Endothelial cell of umbilical vein (primary cell): ENCODE measurements at regions of chr7 and their contacts with region 1.

Region 1: DNA sequence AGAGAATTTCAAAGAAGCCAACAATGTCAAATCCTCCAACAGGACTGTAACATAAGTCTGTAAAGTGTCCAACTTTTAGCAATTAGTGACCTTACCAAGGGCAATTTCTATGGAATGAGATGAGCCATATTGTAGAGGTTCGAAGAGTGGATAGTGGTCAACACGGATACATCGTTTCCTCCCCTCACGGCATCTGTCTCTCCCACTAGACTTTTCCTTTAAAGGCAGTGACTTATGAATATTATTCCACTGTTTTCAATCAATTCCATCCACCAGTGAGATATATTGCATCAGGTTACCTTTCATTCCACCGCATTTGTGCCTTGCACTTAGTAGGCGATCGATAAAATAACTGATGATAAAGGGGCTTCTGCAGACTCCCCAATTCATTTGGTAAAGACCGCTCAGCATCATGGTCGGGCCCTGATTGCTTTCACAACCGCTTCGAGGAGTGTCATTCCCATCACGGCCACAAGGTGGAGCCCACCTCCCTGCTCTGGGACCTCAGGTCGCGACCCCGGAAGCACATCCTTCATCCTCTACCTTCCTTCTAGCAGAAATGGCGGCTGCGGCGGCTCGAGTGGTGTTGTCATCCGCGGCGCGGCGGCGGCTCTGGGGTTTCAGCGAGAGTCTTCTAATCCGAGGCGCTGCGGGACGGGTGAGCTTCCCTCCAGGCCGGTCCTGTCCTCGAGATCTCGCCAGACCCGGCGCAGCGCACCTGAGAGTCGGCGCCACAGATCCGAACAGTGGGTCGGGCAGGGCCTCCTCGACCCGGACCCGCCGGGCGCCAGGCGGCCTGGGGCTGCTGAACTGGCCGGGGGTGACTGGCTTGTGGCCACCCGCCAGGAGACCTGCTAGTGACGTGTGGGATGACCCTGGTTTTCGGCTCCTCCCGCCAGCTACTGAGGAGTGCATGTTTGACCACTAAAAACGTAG is at the start of gene PMPCB:
- DNase-seq: peak; percentile 87
- H3K4me3 ChIP-seq: peak within 1 kb of the TSS; percentile 63 to 89 (median 81)
- H3K27ac ChIP-seq: peak within 1 kb of the TSS; percentile 68
- H3K4me1 ChIP-seq: peaks cover 10% of the 10 kb centered on the region
- H3K27me3 ChIP-seq: peaks cover 0 to 3% of the 10 kb centered on the region in 2 experiments
- CTCF ChIP-seq: peak; percentile 93 to 96
- POLR2A ChIP-seq: no peak
- total RNA-seq, gene PMPCB: 36.8 and 39.7 TPM in 2 replicates

Region 2: GRCh38 chr7:103307503-103308231 is 10.5 kb after region 1 on chr7:
- CTCF ChIA-PET with region 1: interaction called, 7 read pairs
- POLR2A ChIA-PET with region 1: no interaction called
- dilution Hi-C with region 1: no loop called
- intact Hi-C with region 1: loop called (anchors 1 kb)
- DNase-seq: peak; percentile 38
- H3K4me3 ChIP-seq: no peak overlapping the region
- H3K27ac ChIP-seq: no peak overlapping the region
- H3K4me1 ChIP-seq: peaks cover 10% of the 10 kb centered on the region
- H3K27me3 ChIP-seq: no peaks in the 10 kb centered on the region
- CTCF ChIP-seq: no peak
- POLR2A ChIP-seq: no peak

Region 3: DNA sequence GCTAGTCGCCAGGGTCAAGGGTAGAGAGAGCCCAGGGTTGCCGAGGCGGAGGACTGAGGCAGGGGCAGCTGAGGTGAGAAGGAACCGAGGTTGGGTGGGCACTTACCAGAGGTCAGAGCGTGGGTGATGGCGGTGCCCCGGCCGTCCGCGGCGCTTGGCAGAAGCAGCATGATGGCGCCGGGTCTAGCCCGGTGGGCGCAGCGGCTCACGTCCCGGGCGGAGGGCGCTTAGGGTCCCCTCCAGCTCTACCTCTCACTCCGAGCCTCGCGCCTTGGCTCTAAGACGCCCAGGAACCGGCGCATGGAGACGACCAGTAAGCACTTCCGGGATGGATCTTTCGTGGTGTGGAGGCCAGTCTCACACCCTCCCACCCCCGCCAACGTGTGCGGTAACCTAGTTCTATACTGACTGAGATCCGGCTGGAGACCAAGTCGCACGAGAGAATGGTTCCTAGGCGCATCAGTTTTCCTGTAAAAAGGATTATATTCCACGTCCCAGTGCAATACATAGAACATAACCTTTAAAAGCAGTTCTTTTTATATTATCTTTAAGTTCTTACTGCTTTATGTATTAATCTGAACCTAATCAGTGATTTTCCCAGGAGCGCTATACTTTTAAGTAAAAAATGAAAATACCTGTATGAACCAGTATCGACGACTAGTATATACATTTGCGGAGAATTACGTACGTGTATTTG is 47.4 kb after region 1 on chr7 and contains the start of gene DNAJC2:
- CTCF ChIA-PET with region 1: no interaction called
- POLR2A ChIA-PET with region 1: no interaction called
- dilution Hi-C with region 1: no loop called
- intact Hi-C with region 1: loop called (anchors 1 kb)
- DNase-seq: peak; percentile 86
- H3K4me3 ChIP-seq: peak within 1 kb of the TSS; percentile 91 to 99 (median 94)
- H3K27ac ChIP-seq: peak within 1 kb of the TSS; percentile 85
- H3K4me1 ChIP-seq: peaks cover 29% of the 10 kb centered on the region
- H3K27me3 ChIP-seq: no peaks in the 10 kb centered on the region
- CTCF ChIP-seq: no peak
- POLR2A ChIP-seq: peak; percentile 88
- total RNA-seq, gene DNAJC2: 33.3 and 36.3 TPM in 2 replicates

Region 4: DNA sequence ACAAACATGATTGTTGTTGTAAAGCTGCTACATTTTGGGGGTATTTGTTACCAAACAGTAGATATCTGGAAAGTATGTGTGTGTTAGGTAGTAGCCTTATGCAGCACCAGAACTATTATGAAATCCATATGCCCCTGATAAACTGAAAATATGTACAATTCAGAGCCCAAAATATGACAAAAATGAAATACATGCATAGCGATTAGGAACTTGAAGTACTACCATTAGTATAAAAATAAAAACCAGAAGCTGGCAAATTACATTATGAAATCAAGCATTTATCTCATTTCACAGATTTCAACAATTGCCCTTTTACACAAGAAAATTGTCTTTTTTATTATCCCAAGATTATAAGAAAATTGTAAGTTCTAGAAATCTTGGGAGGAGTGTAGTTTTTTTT is 115.0 kb after region 1 on chr7:
- CTCF ChIA-PET with region 1: interaction called, 9 read pairs
- POLR2A ChIA-PET with region 1: no interaction called
- dilution Hi-C with region 1: no loop called
- intact Hi-C with region 1: loop called (anchors 1 kb)
- DNase-seq: no peak
- H3K4me3 ChIP-seq: no peak overlapping the region
- H3K27ac ChIP-seq: no peak overlapping the region
- H3K4me1 ChIP-seq: no peaks in the 10 kb centered on the region
- H3K27me3 ChIP-seq: peaks cover 2 to 5% of the 10 kb centered on the region in 2 experiments
- CTCF ChIP-seq: no peak
- POLR2A ChIP-seq: no peak

Region 5: GRCh38 chr7:103447073-103447951 is 150.1 kb after region 1 on chr7:
- CTCF ChIA-PET with region 1: no interaction called
- POLR2A ChIA-PET with region 1: no interaction called
- dilution Hi-C with region 1: no loop called
- intact Hi-C with region 1: loop called (anchors 5 kb)
- DNase-seq: peak; percentile 39
- H3K4me3 ChIP-seq: no peak overlapping the region
- H3K27ac ChIP-seq: no peak overlapping the region
- H3K4me1 ChIP-seq: peaks cover 7% of the 10 kb centered on the region
- H3K27me3 ChIP-seq: peaks cover 35 to 46% of the 10 kb centered on the region in 2 experiments
- CTCF ChIP-seq: peak; percentile 59 to 83
- POLR2A ChIP-seq: no peak

Region 6: DNA sequence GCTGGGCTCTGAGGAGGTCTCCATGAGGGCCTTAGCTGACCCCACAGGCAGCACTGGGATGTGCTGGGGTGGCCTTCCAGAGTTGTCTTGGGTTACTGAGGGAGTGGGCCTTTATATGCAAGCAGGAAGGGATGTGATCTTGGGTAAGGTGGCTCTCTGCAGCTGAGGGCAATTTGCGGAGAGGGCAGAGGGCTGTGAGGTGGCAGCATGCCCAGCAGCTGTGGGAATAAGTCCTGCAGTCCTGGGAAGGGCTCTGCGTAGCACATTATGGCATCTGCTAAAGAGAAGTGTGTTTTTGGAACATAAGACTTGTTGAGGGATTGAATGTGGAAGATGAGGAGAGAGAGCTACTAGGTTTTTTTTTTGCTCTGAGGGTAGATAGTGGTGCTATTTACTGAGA is 1617.3 kb after region 1 on chr7:
- CTCF ChIA-PET with region 1: no interaction called
- POLR2A ChIA-PET with region 1: no interaction called
- dilution Hi-C with region 1: no loop called
- intact Hi-C with region 1: loop called (anchors 10 kb)
- DNase-seq: no peak
- H3K4me3 ChIP-seq: no peak overlapping the region
- H3K27ac ChIP-seq: no peak overlapping the region
- H3K4me1 ChIP-seq: no peaks in the 10 kb centered on the region
- H3K27me3 ChIP-seq: peaks cover 0 to 8% of the 10 kb centered on the region in 2 experiments
- CTCF ChIP-seq: no peak
- POLR2A ChIP-seq: no peak